CD4-positive, alpha-beta memory T cell (primary cell): ENCODE measurements at regions of chr18 and their contacts with region 1.

Region 1: DNA sequence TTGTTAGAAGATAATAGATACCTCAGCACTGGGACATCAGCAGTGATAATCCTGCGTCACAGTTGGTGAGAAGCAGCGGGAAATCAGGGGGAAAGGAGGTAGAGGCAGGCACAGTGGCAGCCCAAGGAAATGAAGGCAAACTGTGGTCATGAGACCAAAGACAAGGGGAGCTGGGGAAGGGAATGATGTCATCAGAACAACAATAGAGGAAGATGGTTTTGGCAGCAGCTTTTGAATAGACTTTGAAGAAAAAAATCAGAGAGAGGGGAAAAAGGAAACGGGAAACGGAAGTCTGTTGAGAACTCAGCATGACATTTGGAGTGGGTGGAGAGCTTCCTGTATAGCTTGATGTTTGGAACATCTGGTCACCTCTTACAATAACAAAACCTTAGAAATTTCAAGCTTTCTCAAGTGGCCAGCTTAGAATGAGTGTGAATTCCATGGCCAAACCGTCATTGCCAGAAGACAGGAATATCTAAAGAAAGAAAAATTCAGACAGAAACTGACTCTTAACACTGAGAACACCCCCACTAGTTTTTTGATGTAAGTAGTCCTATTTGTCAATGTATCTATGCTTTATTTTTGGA is 18.4 kb upstream of the YES1 start:
- DNase-seq: peak; percentile 63 to 71 (median 68)
- H3K4me3 ChIP-seq: no peak overlapping the region
- H3K4me3 Mint-ChIP-seq: peak overlapping the region; percentile 4 to 82 (median 53)
- H3K27ac ChIP-seq: peak overlapping the region; percentile 17
- H3K27ac Mint-ChIP-seq: peak overlapping the region; percentile 16 to 91 (median 82)
- H3K4me1 ChIP-seq: peaks cover 16% of the 10 kb centered on the region
- H3K4me1 Mint-ChIP-seq: peaks cover 12 to 28% (median 19%) of the 10 kb centered on the region in 4 donors
- H3K27me3 ChIP-seq: no peaks in the 10 kb centered on the region
- H3K27me3 Mint-ChIP-seq: peaks cover 0 to 3% of the 10 kb centered on the region in 2 donors

Region 2: GRCh38 chr18:623761-624620 is 206.4 kb before region 1 on chr18:
- CTCF ChIA-PET with region 1: interaction called, 63 read pairs
- POLR2A ChIA-PET with region 1: interaction called, 3 read pairs
- intact Hi-C with region 1: loop called (anchors 1 kb)
- DNase-seq: peak; percentile 30 to 58 (median 44)
- H3K4me3 ChIP-seq: no peak overlapping the region
- H3K4me3 Mint-ChIP-seq: no peak overlapping the region
- H3K27ac ChIP-seq: no peak overlapping the region
- H3K27ac Mint-ChIP-seq: no peak overlapping the region
- H3K4me1 ChIP-seq: no peaks in the 10 kb centered on the region
- H3K4me1 Mint-ChIP-seq: peaks cover 0 to 2% (median 0%) of the 10 kb centered on the region in 4 donors
- H3K27me3 ChIP-seq: no peaks in the 10 kb centered on the region
- H3K27me3 Mint-ChIP-seq: peaks cover 3 to 26% of the 10 kb centered on the region in 2 donors

Region 3: DNA sequence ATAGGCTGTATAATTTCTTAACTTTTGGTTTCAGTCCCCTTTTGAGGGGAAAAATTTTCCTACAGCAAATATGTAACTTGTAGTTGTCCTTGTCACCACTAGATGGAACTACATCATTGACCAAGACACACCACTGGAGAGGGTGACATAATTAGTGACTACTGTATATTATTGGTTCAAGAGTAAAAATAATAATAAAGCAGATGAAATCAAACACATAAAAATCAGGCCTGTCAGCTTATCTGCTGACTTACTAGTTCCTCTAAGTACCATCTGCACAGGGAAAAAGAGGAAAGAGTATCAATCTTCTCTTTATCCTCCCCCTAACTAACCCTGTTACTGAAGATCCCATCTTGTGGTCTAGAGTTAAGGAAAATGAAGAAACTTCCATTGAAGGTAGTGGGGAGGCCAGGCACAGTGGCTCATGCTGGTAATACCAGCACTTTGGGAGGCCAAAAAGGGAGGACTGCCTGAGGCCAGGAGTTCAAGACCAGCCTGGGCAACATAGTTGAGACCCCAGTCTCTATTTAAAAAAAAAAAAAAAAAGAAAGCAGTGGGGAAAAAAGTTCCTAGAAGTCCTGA is 88.4 kb before region 1 on chr18:
- CTCF ChIA-PET with region 1: interaction called, 589 read pairs
- POLR2A ChIA-PET with region 1: interaction called, 6 read pairs
- intact Hi-C with region 1: loop called (anchors 1 kb)
- DNase-seq: peak in 4 of 5 donors; percentile 45 to 53 (median 50)
- H3K4me3 ChIP-seq: no peak overlapping the region
- H3K4me3 Mint-ChIP-seq: no peak overlapping the region
- H3K27ac ChIP-seq: no peak overlapping the region
- H3K27ac Mint-ChIP-seq: no peak overlapping the region
- H3K4me1 ChIP-seq: no peaks in the 10 kb centered on the region
- H3K4me1 Mint-ChIP-seq: peaks cover 0 to 2% (median 1%) of the 10 kb centered on the region in 4 donors
- H3K27me3 ChIP-seq: no peaks in the 10 kb centered on the region
- H3K27me3 Mint-ChIP-seq: no peaks in the 10 kb centered on the region

Region 4: DNA sequence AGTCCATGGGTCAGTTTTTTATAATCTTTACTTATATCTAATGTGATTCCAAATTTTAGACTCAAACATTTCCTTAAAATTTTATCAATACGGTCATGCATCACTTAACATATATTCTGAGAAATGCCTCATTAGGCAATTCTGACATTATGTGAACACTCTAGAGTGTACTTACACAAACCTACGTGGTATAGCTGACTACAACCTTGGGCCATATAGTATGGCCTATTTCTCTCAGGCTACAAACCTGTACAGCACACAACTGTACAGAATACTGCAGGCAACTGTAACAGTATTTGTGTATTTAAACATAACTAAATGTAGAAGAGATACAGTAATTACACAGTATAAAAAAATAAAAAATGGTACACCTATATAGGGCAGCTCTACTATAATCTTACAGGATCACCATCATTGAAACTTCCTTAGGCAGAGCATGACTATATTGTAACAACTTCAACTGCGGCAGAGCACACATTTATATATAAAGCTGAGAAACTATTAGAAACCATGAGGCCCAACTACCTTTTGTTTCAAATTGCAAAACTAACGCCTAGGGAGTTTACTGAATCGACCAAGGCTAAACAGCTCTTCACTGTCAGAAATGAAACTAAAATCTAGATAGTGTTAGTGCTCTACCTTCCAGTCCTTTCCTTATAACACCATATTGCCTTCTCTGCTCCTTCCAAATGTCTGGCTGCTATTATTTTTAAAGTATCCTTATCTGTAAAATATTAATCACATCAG is 25.2 kb before region 1 on chr18:
- CTCF ChIA-PET with region 1: interaction called, 22 read pairs
- POLR2A ChIA-PET with region 1: interaction called, 45 read pairs
- intact Hi-C with region 1: no loop called
- DNase-seq: no peak
- H3K4me3 ChIP-seq: no peak overlapping the region
- H3K4me3 Mint-ChIP-seq: peak overlapping the region in 7 of 8 donors; percentile 42 to 73 (median 65)
- H3K27ac ChIP-seq: no peak overlapping the region
- H3K27ac Mint-ChIP-seq: peak overlapping the region in 4 of 7 donors; percentile 5 to 73 (median 40)
- H3K4me1 ChIP-seq: peaks cover 50% of the 10 kb centered on the region
- H3K4me1 Mint-ChIP-seq: peaks cover 36 to 58% (median 47%) of the 10 kb centered on the region in 4 donors
- H3K27me3 ChIP-seq: no peaks in the 10 kb centered on the region
- H3K27me3 Mint-ChIP-seq: peaks cover 0 to 2% of the 10 kb centered on the region in 2 donors

Region 5: GRCh38 chr18:812376-813171 is 17.8 kb before region 1 on chr18:
- CTCF ChIA-PET with region 1: interaction called, 31 read pairs
- POLR2A ChIA-PET with region 1: interaction called, 45 read pairs
- intact Hi-C with region 1: loop called (anchors 1 kb)
- DNase-seq: peak; percentile 80 to 86 (median 81)
- H3K4me3 ChIP-seq: peak overlapping the region; percentile 64 to 76
- H3K4me3 Mint-ChIP-seq: peak overlapping the region; percentile 83 to 97 (median 94)
- H3K27ac ChIP-seq: peak overlapping the region; percentile 80
- H3K27ac Mint-ChIP-seq: peak overlapping the region; percentile 97 to 99 (median 98)
- H3K4me1 ChIP-seq: peaks cover 58% of the 10 kb centered on the region
- H3K4me1 Mint-ChIP-seq: peaks cover 40 to 58% (median 50%) of the 10 kb centered on the region in 4 donors
- H3K27me3 ChIP-seq: no peaks in the 10 kb centered on the region
- H3K27me3 Mint-ChIP-seq: peaks cover 0 to 5% of the 10 kb centered on the region in 2 donors

Region 6: DNA sequence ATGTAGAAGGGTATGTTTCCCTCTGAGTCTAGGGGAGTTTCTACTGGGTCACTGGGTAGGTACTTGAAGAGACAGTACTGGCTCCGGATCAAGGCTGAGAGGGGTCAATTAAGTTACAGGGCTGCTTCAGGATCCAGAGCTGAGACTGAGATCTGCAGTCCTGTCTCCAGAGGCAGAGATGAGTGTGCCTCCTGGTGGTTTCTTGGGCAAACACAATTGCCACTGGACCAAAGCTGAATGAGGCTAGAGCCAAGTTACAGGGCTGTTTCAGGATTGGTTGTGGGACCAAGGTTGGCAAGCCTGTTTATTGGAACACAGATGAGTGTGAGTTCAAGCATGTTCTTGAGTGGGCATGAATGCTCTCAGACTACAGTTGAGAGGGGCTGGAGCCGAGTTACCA is 232.2 kb after region 1 on chr18:
- CTCF ChIA-PET with region 1: no interaction called
- POLR2A ChIA-PET with region 1: no interaction called
- intact Hi-C with region 1: no loop called
- DNase-seq: no peak
- H3K4me3 ChIP-seq: no peak overlapping the region
- H3K4me3 Mint-ChIP-seq: no peak overlapping the region
- H3K27ac ChIP-seq: no peak overlapping the region
- H3K27ac Mint-ChIP-seq: no peak overlapping the region
- H3K4me1 ChIP-seq: no peaks in the 10 kb centered on the region
- H3K4me1 Mint-ChIP-seq: no peaks in the 10 kb centered on the region
- H3K27me3 ChIP-seq: no peaks in the 10 kb centered on the region
- H3K27me3 Mint-ChIP-seq: no peaks in the 10 kb centered on the region